ENCODE measurements at regions of chr1 and their contacts with region 1.

Region 1: DNA sequence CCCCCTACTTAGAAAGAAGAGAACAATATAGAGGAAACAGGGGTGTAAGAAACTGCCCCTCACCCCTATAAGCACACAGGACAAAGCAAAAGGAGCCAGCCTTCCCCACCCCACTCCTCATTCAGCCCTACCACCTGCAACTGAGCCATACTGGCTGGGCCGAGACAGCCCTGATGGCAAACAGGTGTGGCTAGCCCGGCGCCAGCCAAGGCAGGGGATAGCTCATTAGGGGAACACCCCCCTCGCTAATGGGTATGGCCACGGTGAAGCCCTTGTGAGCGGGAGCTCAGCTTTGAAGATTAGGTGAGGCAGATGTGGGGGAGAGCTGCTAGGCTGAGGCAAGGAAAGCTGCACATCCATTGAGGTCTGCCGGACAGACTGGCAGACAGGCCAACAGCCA is 65.5 kb downstream of the ERI3 start:
- DNase-seq: no peak
- H3K4me3 ChIP-seq: no peak overlapping the region
- H3K27ac ChIP-seq: no peak overlapping the region
- H3K4me1 ChIP-seq: peaks cover 0 to 3% (median 0%) of the 10 kb centered on the region in 4 experiments; a peak in 1 of 7 replicates
- H3K27me3 ChIP-seq: no peaks in the 10 kb centered on the region
- CTCF ChIP-seq: no peak
- EP300 ChIP-seq: no peak
- POLR2A ChIP-seq: no peak
- RAD21 ChIP-seq: no peak

Region 2: GRCh38 chr1:44029906-44030604 is 259.5 kb before region 1 on chr1:
- CTCF ChIA-PET with region 1: no interaction called
- POLR2A ChIA-PET with region 1: no interaction called
- DNase-seq: peak in 1 of 2 experiments; percentile 92
- H3K4me3 ChIP-seq: peak overlapping the region; percentile 78 to 96 (median 86)
- H3K27ac ChIP-seq: peak overlapping the region; percentile 73; the same call in 1 of the 2 replicates
- H3K4me1 ChIP-seq: peaks cover 12 to 28% (median 18%) of the 10 kb centered on the region in 4 experiments
- H3K27me3 ChIP-seq: no peaks in the 10 kb centered on the region
- CTCF ChIP-seq: no peak
- EP300 ChIP-seq: peak in 1 of 2 experiments; percentile 3; a peak in 1 of 3 replicates
- POLR2A ChIP-seq: no peak; a peak in 1 of 3 replicates
- RAD21 ChIP-seq: no peak

Region 3: DNA sequence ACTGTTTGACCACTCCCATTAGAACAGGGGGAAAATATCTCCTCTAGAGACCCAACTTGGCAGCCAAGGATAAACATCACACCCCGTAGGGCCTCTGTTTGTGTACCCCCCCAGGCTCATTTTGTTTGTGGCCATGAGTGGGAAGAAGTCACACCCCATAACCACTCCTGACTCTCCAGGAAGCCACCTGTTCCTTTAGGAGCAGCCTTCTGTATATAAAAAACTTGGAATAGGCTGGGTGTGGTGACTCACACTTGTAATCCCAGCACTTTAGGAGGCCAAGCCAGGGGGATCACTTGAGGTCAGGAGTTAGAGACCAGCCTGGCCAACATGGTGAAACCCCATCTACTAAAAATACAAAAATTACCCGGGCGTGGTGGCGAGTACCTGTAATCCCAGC is 229.6 kb before region 1 on chr1:
- CTCF ChIA-PET with region 1: no interaction called
- POLR2A ChIA-PET with region 1: no interaction called
- DNase-seq: no peak
- H3K4me3 ChIP-seq: no peak overlapping the region
- H3K27ac ChIP-seq: no peak overlapping the region
- H3K4me1 ChIP-seq: no peaks in the 10 kb centered on the region
- H3K27me3 ChIP-seq: no peaks in the 10 kb centered on the region; a peak in 2 of 7 replicates
- CTCF ChIP-seq: no peak
- EP300 ChIP-seq: no peak
- POLR2A ChIP-seq: no peak
- RAD21 ChIP-seq: no peak

Region 4: GRCh38 chr1:44300852-44301251 is 11.3 kb after region 1 on chr1:
- CTCF ChIA-PET with region 1: interaction called, 60 read pairs
- POLR2A ChIA-PET with region 1: interaction called, 3 read pairs
- DNase-seq: no peak
- H3K4me3 ChIP-seq: no peak overlapping the region
- H3K27ac ChIP-seq: no peak overlapping the region
- H3K4me1 ChIP-seq: peaks cover 0 to 5% (median 0%) of the 10 kb centered on the region in 4 experiments; a peak in 3 of 7 replicates
- H3K27me3 ChIP-seq: no peaks in the 10 kb centered on the region
- CTCF ChIP-seq: no peak
- EP300 ChIP-seq: no peak
- POLR2A ChIP-seq: no peak
- RAD21 ChIP-seq: no peak

Region 5: DNA sequence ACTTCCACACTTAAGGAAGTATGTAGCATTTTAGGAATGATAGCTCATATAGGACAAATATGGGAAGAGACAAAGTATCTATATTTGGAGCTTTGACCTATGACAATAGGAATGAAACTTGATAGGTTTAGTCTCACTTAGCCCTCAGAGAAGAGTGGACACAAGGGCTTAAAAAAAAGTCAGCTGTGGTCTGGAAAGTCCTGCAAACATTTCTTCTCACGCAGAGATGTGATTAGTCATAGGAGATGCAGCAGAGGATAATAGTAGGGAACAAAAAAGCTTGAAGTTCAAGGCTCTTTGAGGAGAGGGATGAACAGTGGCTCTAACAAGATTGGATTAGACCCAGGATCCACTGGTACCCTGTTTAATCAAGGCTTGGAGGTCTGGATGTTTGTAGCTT is 100.7 kb after region 1 on chr1:
- CTCF ChIA-PET with region 1: no interaction called
- POLR2A ChIA-PET with region 1: no interaction called
- DNase-seq: no peak
- H3K4me3 ChIP-seq: no peak overlapping the region
- H3K27ac ChIP-seq: no peak overlapping the region
- H3K4me1 ChIP-seq: peaks cover 0 to 2% (median 0%) of the 10 kb centered on the region in 4 experiments; a peak in 1 of 7 replicates
- H3K27me3 ChIP-seq: no peaks in the 10 kb centered on the region
- CTCF ChIP-seq: no peak
- EP300 ChIP-seq: no peak
- POLR2A ChIP-seq: no peak
- RAD21 ChIP-seq: no peak